CD8-positive, alpha-beta T cell (primary cell): ENCODE measurements at regions of chr1 and their contacts with region 1.

Region 1: DNA sequence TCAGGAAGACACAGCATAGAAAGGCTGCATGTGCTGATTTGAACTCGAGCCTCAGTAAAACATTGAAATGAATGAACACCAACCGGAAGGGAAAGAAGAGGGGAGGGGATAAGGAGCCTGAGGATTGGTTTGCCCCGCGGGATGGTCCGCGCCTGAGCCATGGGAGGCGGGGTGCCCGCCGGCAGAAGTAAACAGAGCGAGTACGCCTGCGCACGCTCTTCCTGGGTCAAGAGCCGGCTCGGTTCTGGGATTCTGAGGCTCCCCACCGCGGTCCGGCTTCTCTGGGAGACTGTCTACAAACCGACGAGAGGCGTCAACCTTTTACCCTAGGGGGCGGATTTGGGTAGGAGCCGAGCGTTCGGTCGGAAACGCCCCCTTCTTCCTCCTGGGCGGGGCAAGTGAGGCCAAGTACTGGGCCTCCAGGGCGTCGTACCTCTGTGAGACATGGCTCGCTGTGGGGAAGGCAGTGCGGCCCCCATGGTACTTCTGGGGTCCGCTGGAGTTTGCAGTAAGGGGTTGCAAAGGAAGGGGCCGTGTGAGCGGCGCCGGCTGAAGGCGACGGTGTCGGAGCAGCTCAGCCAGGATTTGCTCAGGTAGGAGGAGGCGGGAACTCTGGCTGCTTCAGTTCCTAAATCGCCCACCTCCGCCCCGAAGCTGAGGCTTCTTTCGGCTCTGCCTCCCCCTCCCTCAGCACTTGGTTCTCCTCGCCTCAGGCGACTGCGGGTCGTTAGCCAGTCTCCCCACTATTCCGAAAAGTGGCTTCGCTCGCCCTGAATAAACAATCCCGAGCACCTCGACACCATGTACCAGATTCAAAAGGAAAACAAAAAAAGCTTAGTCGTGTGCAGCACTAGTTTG is at the start of gene BTBD8:
- DNase-seq: peak; percentile 75 to 91 (median 88)
- ATAC-seq: peak; percentile 97
- H3K4me3 ChIP-seq: peak within 1 kb of the TSS; percentile 82 to 88
- H3K4me3 Mint-ChIP-seq: peak within 1 kb of the TSS; percentile 95
- H3K27ac ChIP-seq: peak within 1 kb of the TSS; percentile 60 to 71
- H3K27ac Mint-ChIP-seq: peak within 1 kb of the TSS; percentile 93
- H3K4me1 ChIP-seq: peaks cover 5% of the 10 kb centered on the region
- H3K4me1 Mint-ChIP-seq: peaks cover 13% of the 10 kb centered on the region
- H3K27me3 ChIP-seq: no peaks in the 10 kb centered on the region
- H3K27me3 Mint-ChIP-seq: no peaks in the 10 kb centered on the region
- CTCF ChIP-seq: no peak
- total RNA-seq, gene BTBD8: 0.72 to 1.2 TPM

Region 2: DNA sequence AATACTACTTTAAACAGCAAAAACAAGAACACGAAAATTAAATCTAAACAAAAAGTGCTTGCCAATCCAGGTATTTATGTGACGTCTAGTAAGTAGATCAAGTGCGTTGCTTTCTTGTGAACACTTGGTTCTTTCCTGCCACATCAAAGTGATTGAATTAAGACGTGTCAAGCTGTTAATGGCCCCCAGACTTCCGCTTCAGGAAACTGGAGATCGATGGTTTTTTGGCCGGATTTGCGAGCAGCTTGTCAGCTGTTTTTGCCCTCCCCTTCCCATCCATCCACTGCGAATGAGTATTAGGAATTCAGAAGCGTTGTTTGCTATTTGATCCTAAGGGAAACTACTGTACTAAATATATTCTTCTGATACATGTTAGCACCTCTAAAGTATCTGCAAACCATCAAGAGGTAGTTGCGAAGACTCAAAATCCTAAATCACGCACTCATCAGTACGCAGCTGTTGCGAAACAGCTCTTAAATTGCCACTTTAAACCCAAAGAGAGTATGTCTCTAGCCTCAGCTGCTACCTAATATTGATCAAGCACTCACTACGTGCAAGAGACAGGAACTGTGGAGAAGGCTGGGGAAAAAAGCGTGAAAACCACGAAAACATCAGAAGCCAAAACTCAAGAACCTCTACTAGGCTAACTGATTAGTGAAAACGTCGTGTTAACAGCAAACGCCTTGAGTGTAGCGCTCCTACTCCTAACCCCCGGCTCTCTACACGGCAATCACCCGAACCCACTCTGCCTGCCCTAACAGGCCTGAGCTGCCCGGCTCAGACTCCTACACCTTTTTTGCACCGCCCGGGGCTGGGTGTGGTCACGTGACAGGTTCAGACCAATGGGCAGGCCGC is 131.6 kb before region 1 on chr1:
- CTCF ChIA-PET with region 1: no interaction called
- POLR2A ChIA-PET with region 1: no interaction called
- intact Hi-C with region 1: loop called in 1 of 2 experiments (anchors 5 kb)
- DNase-seq: peak; percentile 11 to 93 (median 41)
- ATAC-seq: peak; percentile 75
- H3K4me3 ChIP-seq: peak overlapping the region; percentile 17 to 46
- H3K4me3 Mint-ChIP-seq: peak overlapping the region; percentile 63
- H3K27ac ChIP-seq: peak overlapping the region; percentile 44 to 88
- H3K27ac Mint-ChIP-seq: peak overlapping the region; percentile 92
- H3K4me1 ChIP-seq: peaks cover 13% of the 10 kb centered on the region
- H3K4me1 Mint-ChIP-seq: peaks cover 22% of the 10 kb centered on the region
- H3K27me3 ChIP-seq: no peaks in the 10 kb centered on the region
- H3K27me3 Mint-ChIP-seq: no peaks in the 10 kb centered on the region
- CTCF ChIP-seq: no peak

Region 3: GRCh38 chr1:92016720-92017316 is 63.5 kb before region 1 on chr1:
- CTCF ChIA-PET with region 1: no interaction called
- POLR2A ChIA-PET with region 1: no interaction called
- intact Hi-C with region 1: loop called in 1 of 2 experiments (anchors 5 kb)
- DNase-seq: peak in 2 of 9 experiments; percentile 26 to 41
- ATAC-seq: peak; percentile 20
- H3K4me3 ChIP-seq: no peak overlapping the region
- H3K4me3 Mint-ChIP-seq: no peak overlapping the region
- H3K27ac ChIP-seq: peak overlapping the region in 1 of 2 experiments; percentile 47
- H3K27ac Mint-ChIP-seq: peak overlapping the region; percentile 16
- H3K4me1 ChIP-seq: peaks cover 6% of the 10 kb centered on the region
- H3K4me1 Mint-ChIP-seq: peaks cover 15% of the 10 kb centered on the region
- H3K27me3 ChIP-seq: no peaks in the 10 kb centered on the region
- H3K27me3 Mint-ChIP-seq: no peaks in the 10 kb centered on the region
- CTCF ChIP-seq: no peak